ENCODE measurements at regions of chr9 and their contacts with region 1.

Region 1: GRCh38 chr9:115615821-115616665 is 498.1 kb upstream of the TNC start:
- DNase-seq: peak; percentile 55
- H3K4me3 ChIP-seq: no peak overlapping the region
- H3K27ac ChIP-seq: peak overlapping the region; percentile 98
- H3K4me1 ChIP-seq: peaks cover 54% of the 10 kb centered on the region
- H3K27me3 ChIP-seq: no peaks in the 10 kb centered on the region
- CTCF ChIP-seq: no peak

Region 2: GRCh38 chr9:115649991-115650472 is 34.0 kb after region 1 on chr9:
- CTCF ChIA-PET with region 1: no interaction called
- POLR2A ChIA-PET with region 1: interaction called, 12 read pairs
- intact Hi-C with region 1: no loop called
- DNase-seq: no peak
- H3K4me3 ChIP-seq: no peak overlapping the region
- H3K27ac ChIP-seq: no peak overlapping the region
- H3K4me1 ChIP-seq: peaks cover 1% of the 10 kb centered on the region
- H3K27me3 ChIP-seq: no peaks in the 10 kb centered on the region
- CTCF ChIP-seq: no peak

Region 3: DNA sequence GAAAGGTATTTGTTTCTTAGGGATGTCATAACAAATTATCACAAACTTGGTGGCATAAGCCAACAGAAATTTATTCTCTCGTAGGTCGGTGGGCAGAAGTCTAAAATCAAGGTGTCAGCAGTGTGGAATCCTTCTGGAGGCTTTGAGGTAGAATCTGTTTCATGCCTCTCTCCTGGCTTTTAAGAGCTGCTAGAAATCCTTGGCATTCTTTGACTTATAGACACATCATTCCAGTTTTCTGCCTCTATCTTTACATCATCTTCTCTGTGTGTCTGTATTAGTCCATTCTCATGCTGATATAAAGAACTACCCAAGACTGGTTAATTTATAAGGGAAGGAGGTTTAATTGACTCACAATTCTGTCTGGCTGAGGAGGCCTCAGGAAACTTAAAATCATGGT is 49.5 kb after region 1 on chr9:
- CTCF ChIA-PET with region 1: no interaction called
- POLR2A ChIA-PET with region 1: no interaction called
- intact Hi-C with region 1: no loop called
- DNase-seq: no peak
- H3K4me3 ChIP-seq: no peak overlapping the region
- H3K27ac ChIP-seq: no peak overlapping the region
- H3K4me1 ChIP-seq: no peaks in the 10 kb centered on the region
- H3K27me3 ChIP-seq: no peaks in the 10 kb centered on the region
- CTCF ChIP-seq: no peak

Region 4: GRCh38 chr9:115694014-115694413 is 78.0 kb after region 1 on chr9:
- CTCF ChIA-PET with region 1: no interaction called
- POLR2A ChIA-PET with region 1: no interaction called
- intact Hi-C with region 1: loop called (anchors 5 kb)
- DNase-seq: peak; percentile 89
- H3K4me3 ChIP-seq: no peak overlapping the region
- H3K27ac ChIP-seq: peak overlapping the region; percentile 54
- H3K4me1 ChIP-seq: peaks cover 24% of the 10 kb centered on the region
- H3K27me3 ChIP-seq: no peaks in the 10 kb centered on the region
- CTCF ChIP-seq: peak; percentile 57

Region 5: GRCh38 chr9:115832031-115832430 is 216.0 kb after region 1 on chr9:
- CTCF ChIA-PET with region 1: no interaction called
- POLR2A ChIA-PET with region 1: no interaction called
- intact Hi-C with region 1: no loop called
- DNase-seq: no peak
- H3K4me3 ChIP-seq: no peak overlapping the region
- H3K27ac ChIP-seq: no peak overlapping the region
- H3K4me1 ChIP-seq: no peaks in the 10 kb centered on the region
- H3K27me3 ChIP-seq: no peaks in the 10 kb centered on the region
- CTCF ChIP-seq: no peak

Region 6: DNA sequence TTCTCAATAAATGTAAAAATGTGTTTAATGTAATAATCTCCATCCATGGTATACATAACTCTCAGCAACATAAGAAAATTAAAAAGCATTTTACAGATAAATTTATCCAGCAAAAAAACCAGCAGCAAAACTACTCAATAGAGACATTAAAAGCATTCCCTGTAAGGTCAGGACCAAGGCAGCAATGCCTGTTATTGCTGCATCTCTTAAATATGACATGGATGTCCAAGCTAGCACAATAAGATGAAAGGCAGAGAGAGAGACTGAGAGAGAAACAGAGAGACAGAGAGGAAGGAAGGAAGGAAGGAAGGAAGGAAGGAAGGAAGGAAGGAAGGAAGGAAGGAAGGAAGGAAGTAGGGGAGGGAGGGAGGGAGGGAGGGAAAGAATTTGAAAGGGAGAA is 248.5 kb after region 1 on chr9:
- CTCF ChIA-PET with region 1: no interaction called
- POLR2A ChIA-PET with region 1: no interaction called
- intact Hi-C with region 1: loop called (anchors 1 kb)
- DNase-seq: peak; percentile 96
- H3K4me3 ChIP-seq: no peak overlapping the region
- H3K27ac ChIP-seq: peak overlapping the region; percentile 99
- H3K4me1 ChIP-seq: peaks cover 61% of the 10 kb centered on the region
- H3K27me3 ChIP-seq: no peaks in the 10 kb centered on the region
- CTCF ChIP-seq: no peak

Region 7: GRCh38 chr9:116123171-116123706 is 507.2 kb after region 1 on chr9:
- CTCF ChIA-PET with region 1: no interaction called
- POLR2A ChIA-PET with region 1: no interaction called
- intact Hi-C with region 1: loop called (anchors 1 kb)
- DNase-seq: peak; percentile 88
- H3K4me3 ChIP-seq: no peak overlapping the region
- H3K27ac ChIP-seq: peak overlapping the region; percentile 85
- H3K4me1 ChIP-seq: peaks cover 21% of the 10 kb centered on the region
- H3K27me3 ChIP-seq: no peaks in the 10 kb centered on the region
- CTCF ChIP-seq: no peak

Measured in A673 (cell line).